ENCODE measurements at regions of chr10 and their contacts with region 1.

Region 1: DNA sequence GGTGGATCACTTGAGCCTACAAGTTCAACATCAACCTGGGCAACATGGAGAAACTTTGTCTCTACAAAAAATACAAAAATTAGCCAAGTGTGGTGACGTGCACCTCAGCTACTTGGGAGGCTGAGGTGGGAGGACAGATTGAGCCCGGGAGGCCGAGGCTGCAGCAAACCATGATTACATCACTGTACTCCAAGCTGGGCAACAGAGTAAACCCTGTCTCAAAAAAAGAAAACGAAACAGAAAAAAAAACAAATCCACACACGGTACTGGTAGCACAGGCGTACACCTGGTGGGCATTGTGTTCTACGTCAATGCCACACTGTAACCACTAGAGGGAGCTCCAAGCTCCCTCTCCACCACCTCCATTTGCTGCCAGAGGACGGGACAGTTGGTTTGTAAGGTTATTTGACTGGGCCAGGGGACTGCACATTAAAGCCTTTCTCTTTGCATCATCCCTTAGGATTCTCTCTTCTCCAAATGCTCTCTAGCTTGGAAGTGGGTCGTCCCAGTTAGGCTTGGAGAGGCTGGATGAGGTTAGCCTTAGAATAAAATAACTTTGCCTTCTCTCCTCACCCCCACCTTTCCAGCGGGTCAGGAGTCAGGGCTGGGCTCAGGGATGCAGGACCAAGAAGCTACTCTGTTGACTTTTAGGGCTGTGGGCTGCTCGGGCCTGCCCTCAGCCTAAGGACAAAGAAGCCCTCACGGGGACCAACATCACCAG is 130.8 kb downstream of the SORBS1 start:
- DNase-seq: peak in 3 of 5 donors; percentile 60 to 66 (median 61)
- ATAC-seq: peak; percentile 34 to 75 (median 69)
- H3K4me3 ChIP-seq: no peak overlapping the region
- H3K27ac ChIP-seq: peak overlapping the region in 10 of 12 donors; percentile 33 to 91 (median 81)
- H3K4me1 ChIP-seq: peaks cover 16 to 99% (median 84%) of the 10 kb centered on the region in 12 donors
- H3K27me3 ChIP-seq: no peaks in the 10 kb centered on the region
- CTCF ChIP-seq: peak; percentile 94 to 99 (median 98)
- POLR2A ChIP-seq: no peak

Region 2: DNA sequence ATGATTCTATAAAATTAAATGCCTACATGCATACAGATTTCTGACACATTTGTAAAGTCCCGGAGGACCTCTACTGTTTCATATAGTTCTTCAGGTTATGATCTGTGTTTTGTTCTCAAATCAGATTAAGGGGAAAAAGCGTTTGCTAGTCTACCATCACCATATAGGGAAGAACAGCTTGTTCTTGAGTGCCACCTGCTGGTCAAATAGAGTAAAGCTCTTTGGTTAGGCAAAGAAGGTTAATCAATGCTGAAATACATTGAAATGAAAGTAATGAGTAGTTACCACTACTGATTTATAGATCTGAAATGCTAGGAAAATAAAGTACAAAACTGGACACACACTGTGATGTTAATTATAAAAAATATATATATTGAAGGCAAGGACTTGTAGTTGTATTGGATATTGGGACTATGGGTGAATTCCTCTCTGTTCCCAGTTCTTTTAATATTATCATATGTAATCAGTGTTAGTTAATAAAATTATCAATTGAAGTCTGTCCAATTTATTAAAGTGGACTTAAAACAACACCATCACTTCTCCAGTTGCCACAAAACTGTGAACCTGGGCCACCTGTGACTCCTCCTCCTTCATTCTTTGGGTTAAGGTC is 67.0 kb before region 1 on chr10:
- intact Hi-C with region 1: no loop called
- DNase-seq: peak in 1 of 5 donors; percentile 38
- ATAC-seq: peak in 2 of 4 donors; percentile 26 to 41
- H3K4me3 ChIP-seq: no peak overlapping the region
- H3K27ac ChIP-seq: peak overlapping the region in 3 of 12 donors; percentile 3 to 70 (median 7)
- H3K4me1 ChIP-seq: peaks cover 5 to 51% (median 23%) of the 10 kb centered on the region in 12 donors
- H3K27me3 ChIP-seq: no peaks in the 10 kb centered on the region
- CTCF ChIP-seq: peak; percentile 85 to 95 (median 91)
- POLR2A ChIP-seq: no peak

Region 3: DNA sequence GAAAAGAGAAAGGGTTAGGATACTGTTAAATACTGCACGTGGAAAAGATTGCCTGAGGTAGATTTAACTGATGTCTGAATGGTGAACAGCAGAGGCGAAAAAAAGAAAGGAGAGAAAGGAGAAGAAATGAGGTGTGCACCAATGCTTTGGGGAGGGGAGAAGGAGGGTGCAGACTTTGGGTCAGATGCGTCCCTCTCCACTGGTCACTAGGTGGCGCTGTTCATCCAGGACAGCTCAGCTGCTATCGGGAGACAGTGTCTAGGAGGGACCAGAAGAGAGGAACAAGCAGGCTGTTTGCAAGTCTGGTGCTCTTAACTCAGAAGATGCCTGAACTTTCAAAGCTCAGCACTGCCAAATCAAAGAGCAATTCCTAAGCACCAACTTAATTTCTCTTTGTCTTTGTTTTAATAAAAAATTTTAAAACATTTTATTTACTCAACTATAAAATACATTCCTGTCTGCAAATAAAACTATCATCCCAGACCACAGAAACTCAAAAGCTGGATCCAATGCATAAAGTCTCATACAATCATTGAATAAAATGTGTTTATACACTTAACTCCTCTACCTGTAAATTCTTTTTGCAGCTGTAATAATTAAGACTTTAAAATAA is 55.7 kb before region 1 on chr10:
- intact Hi-C with region 1: loop called in 6 of 10 experiments (anchors 5 kb)
- DNase-seq: peak; percentile 71 to 85 (median 83)
- ATAC-seq: peak; percentile 70 to 89 (median 86)
- H3K4me3 ChIP-seq: no peak overlapping the region
- H3K27ac ChIP-seq: peak overlapping the region in 7 of 12 donors; percentile 0 to 77 (median 21)
- H3K4me1 ChIP-seq: peaks cover 0 to 61% (median 36%) of the 10 kb centered on the region in 12 donors
- H3K27me3 ChIP-seq: no peaks in the 10 kb centered on the region
- CTCF ChIP-seq: peak; percentile 86 to 98 (median 94)
- POLR2A ChIP-seq: no peak

Region 4: GRCh38 chr10:95384011-95384704 is 46.2 kb before region 1 on chr10:
- intact Hi-C with region 1: loop called in 5 of 10 experiments (anchors 5 kb)
- DNase-seq: no peak
- ATAC-seq: no peak
- H3K4me3 ChIP-seq: no peak overlapping the region
- H3K27ac ChIP-seq: peak overlapping the region in 2 of 12 donors; percentile 18 to 69
- H3K4me1 ChIP-seq: peaks cover 0 to 63% (median 25%) of the 10 kb centered on the region in 12 donors
- H3K27me3 ChIP-seq: no peaks in the 10 kb centered on the region
- CTCF ChIP-seq: no peak
- POLR2A ChIP-seq: no peak

Region 5: GRCh38 chr10:95467162-95467599 is 36.8 kb after region 1 on chr10:
- intact Hi-C with region 1: loop called in 2 of 10 experiments (anchors 5 kb)
- DNase-seq: peak in 4 of 5 donors; percentile 64 to 81 (median 72)
- ATAC-seq: peak; percentile 84 to 89 (median 88)
- H3K4me3 ChIP-seq: no peak overlapping the region
- H3K27ac ChIP-seq: peak overlapping the region; percentile 14 to 96 (median 90)
- H3K4me1 ChIP-seq: peaks cover 0 to 88% (median 50%) of the 10 kb centered on the region in 12 donors
- H3K27me3 ChIP-seq: no peaks in the 10 kb centered on the region
- CTCF ChIP-seq: peak in 6 of 12 donors; percentile 8 to 46 (median 38)
- POLR2A ChIP-seq: peak in 1 of 2 donors; percentile 30

Region 6: DNA sequence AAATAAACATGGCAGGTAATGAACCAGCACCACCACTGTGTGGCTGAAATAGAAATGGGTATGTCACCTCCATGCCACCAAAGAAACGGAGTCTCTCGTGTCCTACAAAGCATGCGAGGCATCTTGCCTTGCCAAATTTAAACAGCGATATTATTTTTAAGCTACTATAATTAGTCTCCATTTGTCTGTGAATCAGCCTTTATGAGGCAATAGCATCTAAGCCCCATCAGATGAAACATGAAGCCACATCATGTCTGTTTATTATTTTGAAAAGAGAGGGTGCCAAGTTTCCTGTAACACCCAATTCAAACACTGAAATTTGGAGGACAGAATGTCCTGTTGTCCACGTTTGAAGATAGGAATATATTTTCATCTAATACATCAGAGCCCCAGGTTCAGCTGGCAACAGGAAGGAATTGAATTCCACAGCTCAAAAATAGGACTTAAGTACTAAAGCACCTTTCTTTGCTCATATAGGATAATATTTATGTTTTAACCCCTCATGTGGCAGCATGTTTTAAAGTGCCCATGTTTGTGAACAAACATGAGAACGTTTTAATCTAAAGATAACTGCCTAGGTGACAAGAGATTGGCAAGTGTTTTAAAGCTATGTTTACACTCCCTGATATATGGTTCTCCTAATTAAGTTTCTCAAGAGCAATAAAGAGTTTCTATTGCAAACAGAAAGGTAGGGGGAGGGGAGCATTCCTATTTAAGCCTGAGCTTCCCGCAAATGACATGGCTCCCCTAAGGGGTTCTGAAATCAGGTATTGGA is 44.0 kb after region 1 on chr10:
- intact Hi-C with region 1: loop called in 4 of 10 experiments (anchors 5 kb)
- DNase-seq: peak in 4 of 5 donors; percentile 40 to 57 (median 49)
- ATAC-seq: peak; percentile 74 to 82 (median 79)
- H3K4me3 ChIP-seq: peak overlapping the region in 1 of 12 donors; percentile 6
- H3K27ac ChIP-seq: peak overlapping the region; percentile 81 to 98 (median 92)
- H3K4me1 ChIP-seq: peaks cover 10 to 97% (median 67%) of the 10 kb centered on the region in 12 donors
- H3K27me3 ChIP-seq: no peaks in the 10 kb centered on the region
- CTCF ChIP-seq: peak in 4 of 12 donors; percentile 14 to 34 (median 24)
- POLR2A ChIP-seq: peak in 1 of 2 donors; percentile 28

Region 7: GRCh38 chr10:95601116-95601719 is 170.8 kb after region 1 on chr10:
- intact Hi-C with region 1: loop called (anchors 1 to 5 kb)
- DNase-seq: peak; percentile 70 to 83 (median 79)
- ATAC-seq: peak; percentile 66 to 91 (median 86)
- H3K4me3 ChIP-seq: no peak overlapping the region
- H3K27ac ChIP-seq: peak overlapping the region in 5 of 12 donors; percentile 26 to 79 (median 48)
- H3K4me1 ChIP-seq: peaks cover 0 to 33% (median 12%) of the 10 kb centered on the region in 12 donors
- H3K27me3 ChIP-seq: no peaks in the 10 kb centered on the region
- CTCF ChIP-seq: peak; percentile 86 to 99 (median 96)
- POLR2A ChIP-seq: no peak

Region 8: DNA sequence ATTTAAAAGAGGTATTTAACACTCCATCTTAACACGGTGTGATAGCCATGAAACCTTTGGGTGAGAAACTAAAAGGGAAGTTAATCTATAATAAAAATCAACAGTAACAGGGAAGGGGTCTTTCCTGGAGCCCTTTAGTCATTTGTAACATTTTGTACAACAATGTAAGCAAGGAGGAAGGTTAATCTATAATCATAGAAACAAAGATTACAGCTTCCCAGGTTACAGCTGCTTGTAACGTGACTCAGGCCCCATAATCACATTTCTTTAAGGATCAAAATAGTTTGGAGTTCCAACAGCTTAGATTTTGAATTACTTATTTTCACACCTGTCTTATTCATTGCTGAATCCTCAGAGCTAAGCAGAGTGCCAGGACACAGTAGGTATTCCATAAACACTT is 459.4 kb after region 1 on chr10:
- intact Hi-C with region 1: no loop called
- DNase-seq: no peak
- ATAC-seq: no peak
- H3K4me3 ChIP-seq: no peak overlapping the region
- H3K27ac ChIP-seq: no peak overlapping the region
- H3K4me1 ChIP-seq: no peaks in the 10 kb centered on the region
- H3K27me3 ChIP-seq: no peaks in the 10 kb centered on the region
- CTCF ChIP-seq: no peak
- POLR2A ChIP-seq: no peak

Measured in heart left ventricle (tissue), 16 donors.